Esophagus muscularis mucosa (tissue), 4 donors: ENCODE measurements at regions of chr1 and their contacts with region 1.

Region 1: DNA sequence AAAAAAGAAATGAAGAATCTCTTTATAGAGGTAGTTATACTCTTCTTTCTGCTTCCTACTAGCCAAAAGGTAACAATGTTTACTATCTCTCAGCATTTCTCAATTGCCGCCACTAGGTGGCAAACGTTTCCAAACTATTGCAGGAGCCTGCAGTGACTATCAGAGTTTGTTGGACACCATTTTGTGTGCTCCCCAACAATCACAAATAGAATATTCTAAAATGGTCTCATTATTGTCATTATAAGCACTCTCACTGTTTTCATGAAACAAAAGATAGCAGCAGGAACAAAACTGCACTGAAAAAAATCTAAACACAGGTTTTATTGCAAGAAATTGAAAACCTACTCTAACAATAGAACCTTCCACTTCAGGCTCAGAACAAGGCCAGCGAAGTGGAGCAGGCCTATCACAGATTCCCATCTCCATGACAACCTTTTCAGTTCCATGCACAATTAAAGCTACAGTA is 83.9 kb upstream of the PLPPR4 start:
- DNase-seq: no peak
- H3K4me3 ChIP-seq: no peak overlapping the region
- H3K27ac ChIP-seq: peak overlapping the region in 1 of 4 donors; percentile 2
- H3K4me1 ChIP-seq: peaks cover 7 to 14% (median 8%) of the 10 kb centered on the region in 4 donors
- H3K27me3 ChIP-seq: no peaks in the 10 kb centered on the region
- CTCF ChIP-seq: peak; percentile 74 to 90 (median 75)
- EP300 ChIP-seq: no peak
- POLR2A ChIP-seq: no peak

Region 2: DNA sequence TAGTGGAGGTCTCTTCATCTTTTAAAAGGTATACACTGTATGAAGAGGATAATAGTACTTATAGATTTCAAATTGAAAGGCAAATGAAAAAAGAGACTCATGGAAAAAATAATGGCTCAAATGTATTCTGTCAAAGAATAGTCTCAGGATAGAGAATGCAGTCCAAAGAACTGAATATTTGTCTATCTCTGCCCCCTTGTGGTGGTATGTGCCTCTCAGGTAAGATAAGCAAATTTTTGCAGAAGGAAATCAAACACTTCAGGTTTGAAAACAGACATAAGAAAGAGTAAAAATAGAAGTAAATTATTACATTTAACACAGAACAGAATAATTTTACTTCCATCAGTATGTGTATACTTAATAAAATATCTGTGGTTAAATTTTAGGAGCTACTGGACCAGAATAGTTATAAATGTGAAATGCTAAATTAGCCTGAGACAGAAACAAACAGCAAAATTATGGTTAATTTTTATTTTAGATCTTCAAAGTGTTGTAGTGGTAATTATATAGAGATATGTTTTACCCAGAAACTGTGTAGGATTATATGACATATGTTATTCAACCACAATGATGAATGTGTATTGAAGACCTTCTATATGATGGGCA is 301.1 kb after region 1 on chr1:
- intact Hi-C with region 1: loop called (anchors 2 kb)
- DNase-seq: no peak
- H3K4me3 ChIP-seq: no peak overlapping the region
- H3K27ac ChIP-seq: no peak overlapping the region
- H3K4me1 ChIP-seq: no peaks in the 10 kb centered on the region
- H3K27me3 ChIP-seq: no peaks in the 10 kb centered on the region
- CTCF ChIP-seq: peak; percentile 69 to 76 (median 69)
- EP300 ChIP-seq: no peak
- POLR2A ChIP-seq: no peak

Region 3: GRCh38 chr1:99713006-99713405 is 532.6 kb after region 1 on chr1:
- intact Hi-C with region 1: loop called (anchors 5 kb)
- DNase-seq: no peak
- H3K4me3 ChIP-seq: no peak overlapping the region
- H3K27ac ChIP-seq: no peak overlapping the region
- H3K4me1 ChIP-seq: no peaks in the 10 kb centered on the region
- H3K27me3 ChIP-seq: no peaks in the 10 kb centered on the region
- CTCF ChIP-seq: no peak
- EP300 ChIP-seq: no peak
- POLR2A ChIP-seq: no peak